ENCODE measurements at regions of chr17 and their contacts with region 1.

Region 1: DNA sequence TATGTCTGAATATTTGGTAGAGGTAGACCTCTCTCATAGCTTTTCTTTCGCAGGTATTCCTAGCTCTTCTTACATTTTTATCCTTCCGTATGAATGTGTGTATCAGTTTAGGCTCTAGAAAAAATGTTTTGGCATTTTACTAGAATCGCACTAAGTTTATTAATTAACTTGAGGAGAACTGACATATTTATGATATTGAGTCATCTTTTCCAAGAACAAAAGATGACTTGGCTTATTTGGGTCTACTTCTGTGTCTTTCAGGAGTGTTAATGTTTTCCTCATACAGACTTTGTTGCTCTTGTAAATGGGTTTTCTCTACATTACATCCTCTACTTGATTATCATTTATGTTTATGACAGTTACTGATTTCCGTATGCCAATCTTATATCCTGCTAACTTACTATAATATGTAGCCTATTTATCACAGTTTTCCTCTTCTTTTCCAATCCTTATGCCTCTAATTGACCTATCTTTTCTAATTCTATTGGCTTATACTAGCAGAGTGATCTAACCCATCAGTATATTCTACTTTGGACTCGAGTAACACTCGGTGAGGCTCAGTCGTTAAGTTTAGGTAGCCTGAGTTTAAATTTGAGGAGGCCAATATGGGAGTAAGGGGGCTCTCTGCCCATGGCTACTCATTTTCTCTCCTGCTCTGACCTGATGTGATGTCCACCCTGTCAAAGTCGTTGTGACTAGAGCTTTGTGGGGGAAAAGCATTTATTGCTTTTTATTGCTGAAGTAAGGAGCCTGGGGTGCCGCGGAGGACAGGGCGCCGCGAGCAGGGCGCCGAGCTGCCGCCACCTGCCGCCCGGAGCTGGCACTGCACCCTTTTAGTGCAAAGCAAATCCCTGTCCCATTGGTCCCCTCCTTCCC is 20.0 kb downstream of the ST6GALNAC1 start:
- DNase-seq: peak; percentile 85
- H3K4me3 Mint-ChIP-seq: no peak overlapping the region
- H3K27ac Mint-ChIP-seq: no peak overlapping the region
- H3K4me1 Mint-ChIP-seq: peaks cover 5% of the 10 kb centered on the region
- H3K27me3 Mint-ChIP-seq: no peaks in the 10 kb centered on the region

Region 2: DNA sequence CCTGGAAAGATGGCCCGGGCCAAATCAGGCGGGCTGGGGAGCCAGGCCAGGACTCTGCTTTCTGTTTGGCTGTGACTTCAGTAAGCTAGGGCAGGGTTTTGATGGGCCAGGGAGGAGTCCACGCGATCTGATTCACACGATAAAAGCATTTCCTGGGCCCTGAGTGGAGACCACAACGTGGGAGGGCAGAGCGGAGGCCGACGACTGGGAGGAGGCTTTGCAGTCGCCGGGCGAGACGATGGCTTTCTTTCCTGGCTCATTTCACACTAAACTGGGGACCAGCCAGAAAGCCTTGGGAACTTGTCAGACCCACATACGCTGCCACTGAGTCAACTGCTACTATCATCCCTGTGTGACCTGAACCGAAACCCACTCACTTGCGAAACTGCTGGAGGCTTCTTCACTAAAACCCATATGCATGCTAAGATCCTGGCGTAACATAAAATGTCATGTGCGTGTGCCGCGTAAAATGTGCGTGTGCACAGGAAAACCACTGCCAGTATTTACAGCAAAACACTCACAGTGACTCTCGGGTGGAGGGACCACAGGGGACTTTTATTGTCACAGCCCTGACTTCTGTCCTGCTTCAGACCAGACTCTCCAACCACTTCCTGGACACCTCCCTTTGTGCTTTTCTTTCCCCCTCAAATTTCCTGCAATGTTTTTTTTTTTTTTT is 108.1 kb before region 1 on chr17:
- CTCF ChIA-PET with region 1: interaction called, 16 read pairs
- POLR2A ChIA-PET with region 1: no interaction called
- intact Hi-C with region 1: no loop called
- DNase-seq: peak; percentile 91
- H3K4me3 Mint-ChIP-seq: peak overlapping the region; percentile 62
- H3K27ac Mint-ChIP-seq: peak overlapping the region; percentile 95
- H3K4me1 Mint-ChIP-seq: peaks cover 45% of the 10 kb centered on the region
- H3K27me3 Mint-ChIP-seq: no peaks in the 10 kb centered on the region

Region 3: GRCh38 chr17:76547184-76547641 is 76.3 kb before region 1 on chr17:
- CTCF ChIA-PET with region 1: interaction called, 19 read pairs
- POLR2A ChIA-PET with region 1: no interaction called
- intact Hi-C with region 1: no loop called
- DNase-seq: peak; percentile 48
- H3K4me3 Mint-ChIP-seq: no peak overlapping the region
- H3K27ac Mint-ChIP-seq: no peak overlapping the region
- H3K4me1 Mint-ChIP-seq: no peaks in the 10 kb centered on the region
- H3K27me3 Mint-ChIP-seq: peaks cover 11% of the 10 kb centered on the region

Region 4: DNA sequence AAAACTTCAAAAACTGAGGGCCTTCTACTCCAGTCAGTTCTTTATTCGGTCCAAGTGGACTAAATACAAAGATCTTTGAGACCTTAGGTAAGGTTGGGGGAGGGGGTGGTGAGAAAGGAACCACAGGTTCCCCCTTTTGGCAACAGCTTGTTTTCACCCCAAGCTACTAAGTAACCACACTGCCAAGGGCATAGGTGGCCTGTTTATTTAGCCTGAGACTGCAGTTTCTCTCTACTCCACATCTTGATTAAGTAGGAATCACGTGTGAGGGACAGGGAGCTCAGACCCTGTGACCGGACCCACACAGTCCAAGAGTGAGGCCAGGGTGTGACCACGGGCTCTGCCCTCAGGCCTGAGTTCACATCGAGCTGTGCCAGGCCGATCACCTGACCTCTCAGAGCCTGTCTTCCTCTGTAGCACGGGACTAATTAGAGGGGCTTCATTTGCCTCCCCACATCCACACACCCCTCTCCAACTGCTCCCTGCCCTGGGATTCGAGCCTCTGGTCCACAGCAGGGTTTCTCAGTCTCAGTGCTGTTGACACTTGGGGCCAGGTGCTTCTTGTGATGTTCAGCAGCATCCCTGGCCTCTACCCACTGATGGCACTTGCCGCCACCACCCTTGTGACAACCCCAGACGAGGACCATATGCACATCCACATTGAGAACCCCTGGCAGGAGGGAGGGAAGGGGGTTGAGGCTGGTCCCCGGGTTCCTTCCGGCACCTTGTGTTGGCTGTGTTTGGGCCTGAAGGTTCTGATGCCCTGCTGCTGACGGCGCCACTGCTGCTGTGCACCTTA is 55.7 kb before region 1 on chr17:
- CTCF ChIA-PET with region 1: interaction called, 22 read pairs
- POLR2A ChIA-PET with region 1: no interaction called
- intact Hi-C with region 1: no loop called
- DNase-seq: no peak
- H3K4me3 Mint-ChIP-seq: no peak overlapping the region
- H3K27ac Mint-ChIP-seq: no peak overlapping the region
- H3K4me1 Mint-ChIP-seq: peaks cover 29% of the 10 kb centered on the region
- H3K27me3 Mint-ChIP-seq: no peaks in the 10 kb centered on the region

Region 5: GRCh38 chr17:76597728-76598474 is 25.6 kb before region 1 on chr17:
- CTCF ChIA-PET with region 1: interaction called, 23 read pairs
- POLR2A ChIA-PET with region 1: no interaction called
- intact Hi-C with region 1: no loop called
- DNase-seq: no peak
- H3K4me3 Mint-ChIP-seq: no peak overlapping the region
- H3K27ac Mint-ChIP-seq: no peak overlapping the region
- H3K4me1 Mint-ChIP-seq: peaks cover 15% of the 10 kb centered on the region
- H3K27me3 Mint-ChIP-seq: peaks cover 6% of the 10 kb centered on the region

Region 6: DNA sequence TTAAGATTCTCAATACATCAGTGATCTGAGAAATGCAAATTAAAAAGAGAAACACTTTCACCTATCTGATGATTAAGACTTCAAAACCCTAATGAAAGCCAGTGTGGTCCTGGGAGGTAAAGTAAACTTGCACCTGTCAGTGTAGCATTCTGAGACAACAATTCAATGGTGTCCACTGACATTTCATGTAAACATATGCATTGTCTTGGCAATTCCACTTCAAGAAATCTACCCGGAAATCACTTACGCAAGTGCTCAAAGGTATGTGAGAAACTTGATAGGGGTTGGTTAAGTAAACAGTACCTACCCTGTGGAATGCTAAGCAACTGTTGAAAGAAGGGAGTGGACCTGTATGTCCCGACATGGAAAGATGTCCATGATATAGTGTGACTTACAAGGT is 18.0 kb after region 1 on chr17:
- CTCF ChIA-PET with region 1: interaction called, 12 read pairs
- POLR2A ChIA-PET with region 1: no interaction called
- intact Hi-C with region 1: no loop called
- DNase-seq: no peak
- H3K4me3 Mint-ChIP-seq: no peak overlapping the region
- H3K27ac Mint-ChIP-seq: no peak overlapping the region
- H3K4me1 Mint-ChIP-seq: peaks cover 32% of the 10 kb centered on the region
- H3K27me3 Mint-ChIP-seq: no peaks in the 10 kb centered on the region